CD8-positive, alpha-beta T cell (primary cell): ENCODE measurements at regions of chr12 and their contacts with region 1.

Region 1: GRCh38 chr12:108514973-108515814 is at the start of gene FICD:
- DNase-seq: peak; percentile 97 to 100 (median 99)
- ATAC-seq: peak; percentile 95
- H3K4me3 ChIP-seq: peak within 1 kb of the TSS; percentile 90 to 99
- H3K4me3 Mint-ChIP-seq: peak within 1 kb of the TSS; percentile 92
- H3K27ac ChIP-seq: peak within 1 kb of the TSS; percentile 74 to 86
- H3K27ac Mint-ChIP-seq: peak within 1 kb of the TSS; percentile 94
- H3K4me1 ChIP-seq: peaks cover 20% of the 10 kb centered on the region
- H3K4me1 Mint-ChIP-seq: peaks cover 30% of the 10 kb centered on the region
- H3K27me3 ChIP-seq: no peaks in the 10 kb centered on the region
- H3K27me3 Mint-ChIP-seq: no peaks in the 10 kb centered on the region
- CTCF ChIP-seq: no peak
- total RNA-seq, gene FICD: 4.2 to 4.3 TPM

Region 2: DNA sequence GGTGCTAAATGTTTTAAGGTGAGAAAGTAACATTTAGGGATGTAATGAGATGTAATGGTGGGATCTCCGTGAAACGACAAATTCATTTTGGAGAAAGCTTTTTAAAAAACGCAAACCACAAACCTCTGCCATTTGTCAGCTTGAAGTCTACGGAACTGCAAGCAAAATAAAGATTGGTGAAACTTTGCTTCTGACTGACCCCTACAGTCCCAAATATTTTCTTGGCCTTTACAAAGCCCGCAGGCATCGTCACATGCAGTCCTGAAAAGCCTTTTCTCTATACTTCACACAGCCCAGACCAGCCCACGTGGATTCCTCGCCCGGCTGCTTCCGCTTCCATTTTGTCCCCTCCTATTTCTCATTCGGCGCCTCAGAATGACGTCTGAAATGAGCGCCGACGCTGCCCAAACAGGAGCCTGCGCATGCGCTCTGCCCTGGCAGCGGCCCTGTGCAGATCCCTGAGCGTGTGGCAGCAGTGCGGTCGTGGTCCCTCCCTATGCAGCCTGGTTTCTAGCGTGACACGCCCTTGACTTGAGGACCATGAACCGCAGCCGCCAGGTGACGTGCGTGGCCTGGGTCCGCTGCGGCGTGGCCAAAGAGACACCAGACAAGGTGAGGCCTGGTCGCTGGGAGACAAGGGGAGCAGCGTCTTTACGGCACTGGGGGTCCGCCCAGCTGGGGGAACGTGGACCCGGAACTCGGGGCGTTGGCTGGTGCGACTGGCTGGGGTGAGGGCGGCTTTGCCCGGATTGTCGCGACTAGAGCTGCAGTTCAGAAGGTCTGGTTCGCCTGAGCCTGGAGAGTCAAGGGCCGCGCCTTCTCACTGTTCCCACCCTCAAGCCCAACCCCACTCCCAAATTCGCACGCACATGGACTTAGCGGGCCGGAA is 829.6 kb before region 1 on chr12 and contains the start of gene PWP1:
- CTCF ChIA-PET with region 1: no interaction called
- POLR2A ChIA-PET with region 1: no interaction called
- intact Hi-C with region 1: loop called in 1 of 2 experiments (anchors 1 kb)
- DNase-seq: peak; percentile 90 to 98 (median 96)
- ATAC-seq: peak; percentile 84
- H3K4me3 ChIP-seq: peak within 1 kb of the TSS; percentile 75 to 82
- H3K4me3 Mint-ChIP-seq: peak within 1 kb of the TSS; percentile 98
- H3K27ac ChIP-seq: peak within 1 kb of the TSS; percentile 74 to 90
- H3K27ac Mint-ChIP-seq: peak within 1 kb of the TSS; percentile 98
- H3K4me1 ChIP-seq: peaks cover 20% of the 10 kb centered on the region
- H3K4me1 Mint-ChIP-seq: peaks cover 34% of the 10 kb centered on the region
- H3K27me3 ChIP-seq: no peaks in the 10 kb centered on the region
- H3K27me3 Mint-ChIP-seq: no peaks in the 10 kb centered on the region
- CTCF ChIP-seq: no peak
- total RNA-seq, gene PWP1: 27.7 to 28.8 TPM

Region 3: DNA sequence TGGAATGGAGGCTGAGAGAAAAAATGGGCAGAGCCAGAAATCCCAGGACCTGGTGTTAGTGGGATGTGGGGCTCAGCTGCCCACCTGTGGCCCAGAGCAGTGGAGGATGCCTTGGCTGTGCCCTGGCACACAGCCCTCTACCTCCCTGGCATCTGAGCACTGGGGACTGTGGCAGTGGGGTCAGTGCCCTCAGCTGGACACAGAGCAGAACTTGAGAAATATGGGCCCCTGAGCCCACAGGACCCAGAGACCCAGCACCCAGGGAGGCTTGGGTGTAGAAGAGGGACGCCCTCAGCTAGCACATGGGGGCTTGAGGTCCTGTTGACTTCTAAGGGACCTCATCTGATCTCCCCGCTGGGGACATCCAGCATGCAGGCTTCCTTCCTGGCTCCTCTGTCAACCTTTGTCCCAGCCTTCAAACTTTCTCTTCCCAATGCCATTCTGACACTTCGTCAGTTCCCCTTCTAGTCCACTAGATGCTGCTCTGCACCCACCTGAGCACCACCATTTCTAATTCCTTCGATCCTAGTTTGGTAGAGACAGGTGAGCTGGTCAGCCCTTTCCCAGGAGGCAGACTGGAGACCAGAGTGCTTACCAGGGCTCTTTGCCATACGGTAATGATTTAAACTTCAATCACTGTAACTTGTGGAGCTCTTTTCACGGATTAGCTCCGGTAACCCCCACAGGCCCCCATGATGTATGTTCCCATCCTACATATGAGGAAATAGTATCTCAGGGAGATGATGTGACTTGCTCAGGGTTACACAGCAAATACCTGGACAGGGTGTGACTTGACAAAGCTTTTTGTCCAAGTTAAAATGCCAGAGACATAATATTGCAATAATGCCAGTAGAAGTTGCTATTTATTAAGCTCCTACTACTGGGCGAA is 597.0 kb before region 1 on chr12:
- CTCF ChIA-PET with region 1: interaction called, 7 read pairs
- POLR2A ChIA-PET with region 1: no interaction called
- intact Hi-C with region 1: loop called (anchors 2 to 10 kb)
- DNase-seq: peak in 2 of 9 experiments; percentile 6 to 12
- ATAC-seq: no peak
- H3K4me3 ChIP-seq: no peak overlapping the region
- H3K4me3 Mint-ChIP-seq: no peak overlapping the region
- H3K27ac ChIP-seq: no peak overlapping the region
- H3K27ac Mint-ChIP-seq: no peak overlapping the region
- H3K4me1 ChIP-seq: no peaks in the 10 kb centered on the region
- H3K4me1 Mint-ChIP-seq: peaks cover under 1% of the 10 kb centered on the region
- H3K27me3 ChIP-seq: no peaks in the 10 kb centered on the region
- H3K27me3 Mint-ChIP-seq: peaks cover 46% of the 10 kb centered on the region
- CTCF ChIP-seq: no peak

Region 4: GRCh38 chr12:108234158-108234557 is 281.0 kb before region 1 on chr12:
- CTCF ChIA-PET with region 1: interaction called, 4 read pairs
- POLR2A ChIA-PET with region 1: no interaction called
- intact Hi-C with region 1: loop called in 1 of 2 experiments (anchors 1 kb)
- DNase-seq: peak in 2 of 9 experiments; percentile 29 to 41
- ATAC-seq: no peak
- H3K4me3 ChIP-seq: no peak overlapping the region
- H3K4me3 Mint-ChIP-seq: no peak overlapping the region
- H3K27ac ChIP-seq: no peak overlapping the region
- H3K27ac Mint-ChIP-seq: no peak overlapping the region
- H3K4me1 ChIP-seq: no peaks in the 10 kb centered on the region
- H3K4me1 Mint-ChIP-seq: no peaks in the 10 kb centered on the region
- H3K27me3 ChIP-seq: no peaks in the 10 kb centered on the region
- H3K27me3 Mint-ChIP-seq: peaks cover 35% of the 10 kb centered on the region
- CTCF ChIP-seq: no peak

Region 5: DNA sequence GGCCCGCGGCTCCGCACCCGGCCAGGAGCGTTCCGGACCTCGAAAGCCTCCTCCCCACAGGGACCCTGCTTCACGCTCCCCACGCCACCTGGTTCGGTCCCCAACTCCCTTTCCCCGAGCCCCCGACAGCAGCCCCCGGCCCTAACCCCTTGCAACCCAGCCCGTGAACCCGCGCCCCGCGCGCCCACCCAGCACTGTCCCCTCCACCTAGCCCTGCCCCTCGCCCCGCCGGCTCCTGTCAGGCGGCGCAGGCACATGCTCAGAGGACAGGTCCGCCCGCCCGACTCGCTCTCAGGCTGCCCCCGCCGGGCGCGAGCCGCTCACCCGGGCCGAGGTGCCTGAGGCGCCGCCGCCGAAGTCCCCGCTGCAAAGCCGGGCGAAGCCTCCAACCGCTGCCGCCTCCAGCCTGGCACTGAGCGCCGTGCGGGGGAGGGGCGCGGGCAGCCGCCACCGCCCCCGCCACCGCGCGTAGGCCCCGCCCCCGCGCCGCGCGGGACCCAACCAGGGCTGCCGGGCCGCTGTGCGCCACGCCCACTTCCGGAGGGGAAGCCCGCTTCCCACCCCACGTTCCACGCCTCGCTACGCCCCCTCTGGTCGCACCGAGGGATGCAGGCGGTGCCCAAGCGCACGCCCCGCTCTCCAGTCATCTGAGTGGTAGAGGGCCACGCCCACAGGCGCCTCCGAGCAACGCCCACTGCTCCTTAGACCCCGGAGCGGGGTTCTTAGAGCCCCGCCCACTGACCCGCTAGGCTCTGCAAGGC is 216.1 kb after region 1 on chr12 and contains the start of gene CORO1C:
- CTCF ChIA-PET with region 1: no interaction called
- POLR2A ChIA-PET with region 1: no interaction called
- intact Hi-C with region 1: loop called in 1 of 2 experiments (anchors 2 kb)
- DNase-seq: peak; percentile 86 to 97 (median 92)
- ATAC-seq: peak; percentile 75
- H3K4me3 ChIP-seq: peak within 1 kb of the TSS; percentile 91 to 93
- H3K4me3 Mint-ChIP-seq: peak within 1 kb of the TSS; percentile 94
- H3K27ac ChIP-seq: peak within 1 kb of the TSS; percentile 67 to 85
- H3K27ac Mint-ChIP-seq: peak within 1 kb of the TSS; percentile 86
- H3K4me1 ChIP-seq: peaks cover 7% of the 10 kb centered on the region
- H3K4me1 Mint-ChIP-seq: peaks cover 26% of the 10 kb centered on the region
- H3K27me3 ChIP-seq: no peaks in the 10 kb centered on the region
- H3K27me3 Mint-ChIP-seq: no peaks in the 10 kb centered on the region
- CTCF ChIP-seq: peak; percentile 74
- total RNA-seq, gene CORO1C: 10.3 to 15.4 TPM

Region 6: GRCh38 chr12:109052414-109053323 is 537.5 kb after region 1 on chr12 and contains the start of gene USP30:
- CTCF ChIA-PET with region 1: no interaction called
- POLR2A ChIA-PET with region 1: no interaction called
- intact Hi-C with region 1: loop called in 1 of 2 experiments (anchors 1 kb)
- DNase-seq: peak; percentile 73 to 93 (median 85)
- ATAC-seq: peak; percentile 74
- H3K4me3 ChIP-seq: peak within 1 kb of the TSS; percentile 85 to 90
- H3K4me3 Mint-ChIP-seq: peak within 1 kb of the TSS; percentile 89
- H3K27ac ChIP-seq: peak within 1 kb of the TSS; percentile 68 to 91
- H3K27ac Mint-ChIP-seq: peak within 1 kb of the TSS; percentile 96
- H3K4me1 ChIP-seq: peaks cover 7% of the 10 kb centered on the region
- H3K4me1 Mint-ChIP-seq: peaks cover 21% of the 10 kb centered on the region
- H3K27me3 ChIP-seq: no peaks in the 10 kb centered on the region
- H3K27me3 Mint-ChIP-seq: no peaks in the 10 kb centered on the region
- CTCF ChIP-seq: no peak
- total RNA-seq, gene USP30: 28.2 to 33.1 TPM

Region 7: DNA sequence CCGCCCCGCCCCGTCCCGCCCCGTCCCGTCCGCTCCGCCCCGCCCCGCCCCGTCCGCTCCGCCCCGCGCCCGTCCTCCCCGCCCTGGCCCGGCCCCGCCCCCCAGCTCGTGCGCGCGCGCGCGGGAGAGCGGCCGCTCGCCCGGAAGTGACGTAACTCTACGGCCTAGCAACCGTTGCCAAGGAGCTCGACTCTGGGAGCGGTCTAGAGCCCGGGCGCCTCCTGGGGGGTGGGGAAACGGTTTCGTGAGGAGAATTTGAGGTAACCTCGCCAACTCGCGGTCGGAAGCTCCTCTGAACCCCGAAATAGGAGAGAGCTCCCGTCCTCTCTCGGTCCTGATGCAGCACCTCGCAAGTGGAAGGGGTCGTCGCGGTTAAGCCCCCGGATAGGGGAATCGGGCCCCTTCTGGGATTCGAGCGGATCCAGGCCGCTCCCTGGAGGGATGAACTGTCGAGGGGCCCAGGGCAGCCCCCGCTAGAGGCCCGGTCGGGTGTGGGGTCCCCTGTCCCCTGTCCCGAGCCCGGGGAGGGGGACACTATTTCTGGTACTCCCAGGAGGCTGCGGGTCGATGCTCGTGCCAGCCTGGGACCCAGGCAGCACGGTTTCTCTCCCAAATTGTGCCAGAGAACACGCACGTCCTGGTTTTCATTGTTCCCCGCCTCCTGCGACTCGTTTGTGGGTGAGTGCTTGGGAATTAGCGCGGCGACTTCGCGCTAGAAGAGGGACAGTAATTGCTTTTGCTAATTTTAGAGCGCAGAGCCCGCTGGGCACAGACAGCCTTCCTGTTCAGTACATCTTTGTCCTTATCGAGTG is 1609.2 kb after region 1 on chr12 and contains the start of gene IFT81:
- CTCF ChIA-PET with region 1: no interaction called
- POLR2A ChIA-PET with region 1: no interaction called
- intact Hi-C with region 1: loop called in 1 of 2 experiments (anchors 10 kb)
- DNase-seq: peak; percentile 94 to 99 (median 96)
- ATAC-seq: peak; percentile 95
- H3K4me3 ChIP-seq: peak within 1 kb of the TSS; percentile 69 to 96
- H3K4me3 Mint-ChIP-seq: peak within 1 kb of the TSS; percentile 91
- H3K27ac ChIP-seq: peak within 1 kb of the TSS; percentile 60 to 73
- H3K27ac Mint-ChIP-seq: peak within 1 kb of the TSS; percentile 83
- H3K4me1 ChIP-seq: peaks cover 10% of the 10 kb centered on the region
- H3K4me1 Mint-ChIP-seq: peaks cover 8% of the 10 kb centered on the region
- H3K27me3 ChIP-seq: no peaks in the 10 kb centered on the region
- H3K27me3 Mint-ChIP-seq: peaks cover 3% of the 10 kb centered on the region
- CTCF ChIP-seq: no peak
- total RNA-seq, gene IFT81: 0.25 to 0.43 TPM